ENCODE measurements at regions of chr17 and their contacts with region 1.

Region 1: GRCh38 chr17:73132085-73132492 is 32.7 kb upstream of the SSTR2 start:
- DNase-seq: peak; percentile 74
- H3K4me3 ChIP-seq: no peak overlapping the region
- H3K27ac ChIP-seq: no peak overlapping the region
- H3K4me1 ChIP-seq: peaks cover 13% of the 10 kb centered on the region
- CTCF ChIP-seq: no peak

Region 2: DNA sequence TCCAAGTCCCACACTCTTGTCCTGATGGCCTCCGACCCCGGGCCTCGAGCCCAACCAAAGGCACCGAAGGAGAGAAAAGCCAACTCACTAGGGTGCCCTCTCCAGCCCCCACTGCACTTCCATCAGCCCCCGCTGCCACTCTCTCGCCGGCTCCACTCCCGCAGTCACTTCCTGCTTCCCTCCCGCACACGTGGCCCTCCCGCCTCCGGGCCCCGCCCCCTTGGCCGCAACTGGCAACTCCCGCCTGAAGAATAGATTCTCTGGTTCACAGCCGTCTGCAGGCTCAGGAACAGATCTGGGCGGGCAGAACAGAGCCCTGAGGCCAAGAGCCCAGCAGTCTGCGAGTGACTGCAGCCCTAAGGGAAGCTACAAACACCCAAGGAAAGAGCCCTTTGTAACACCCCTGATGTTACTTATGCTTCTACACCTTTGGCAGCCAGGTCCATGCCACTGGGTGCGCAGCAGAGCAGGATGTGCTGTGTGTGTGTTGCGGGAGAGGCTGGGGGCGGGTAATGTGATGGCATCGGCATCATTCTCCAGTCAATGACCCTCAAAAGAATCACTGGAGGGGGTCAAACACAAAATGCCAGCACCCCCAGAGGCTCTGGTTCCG is 39.5 kb before region 1 on chr17 and contains the start of gene SLC39A11:
- CTCF ChIA-PET with region 1: no interaction called
- POLR2A ChIA-PET with region 1: interaction called, 6 read pairs
- intact Hi-C with region 1: loop called (anchors 1 kb)
- DNase-seq: peak; percentile 97
- H3K4me3 ChIP-seq: peak within 1 kb of the TSS; percentile 83
- H3K27ac ChIP-seq: no peak within 1 kb of the TSS
- H3K4me1 ChIP-seq: peaks cover 24% of the 10 kb centered on the region
- CTCF ChIP-seq: no peak
- total RNA-seq, gene SLC39A11: 22.7 and 25.6 TPM in 2 replicates

Measured in OCI-LY7 (cell line).